ENCODE measurements at regions of chr6 and their contacts with region 1.

Region 1: GRCh38 chr6:146543211-146543939 is at the start of gene RAB32:
- DNase-seq: peak; percentile 95 to 96 (median 96)
- H3K4me3 ChIP-seq: peak within 1 kb of the TSS; percentile 61 to 99 (median 96)
- H3K4me3 Mint-ChIP-seq: peak within 1 kb of the TSS; percentile 100
- H3K27ac ChIP-seq: peak within 1 kb of the TSS; percentile 99
- H3K27ac Mint-ChIP-seq: peak within 1 kb of the TSS; percentile 99 to 100 (median 100)
- H3K4me1 ChIP-seq: peaks cover 38 to 58% of the 10 kb centered on the region in 2 donors
- H3K4me1 Mint-ChIP-seq: peaks cover 53% of the 10 kb centered on the region
- H3K27me3 ChIP-seq: no peaks in the 10 kb centered on the region
- H3K27me3 Mint-ChIP-seq: no peaks in the 10 kb centered on the region
- CTCF ChIP-seq: peak; percentile 94
- polyA plus RNA-seq, gene RAB32: 82.6 to 588 (median 429) TPM

Region 2: GRCh38 chr6:145963216-145964068 is 579.9 kb before region 1 on chr6:
- intact Hi-C with region 1: loop called in 1 of 2 experiments (anchors 10 kb)
- DNase-seq: peak; percentile 12 to 21 (median 18)
- H3K4me3 ChIP-seq: peak overlapping the region; percentile 42 to 89 (median 86)
- H3K4me3 Mint-ChIP-seq: peak overlapping the region; percentile 90 to 96
- H3K27ac ChIP-seq: peak overlapping the region; percentile 67 to 85
- H3K27ac Mint-ChIP-seq: peak overlapping the region; percentile 88 to 96 (median 92)
- H3K4me1 ChIP-seq: peaks cover 15 to 33% of the 10 kb centered on the region in 2 donors
- H3K4me1 Mint-ChIP-seq: peaks cover 37% of the 10 kb centered on the region
- H3K27me3 ChIP-seq: no peaks in the 10 kb centered on the region
- H3K27me3 Mint-ChIP-seq: peaks cover 0 to 3% (median 0%) of the 10 kb centered on the region in 3 donors
- CTCF ChIP-seq: no peak

Region 3: GRCh38 chr6:146498309-146498708 is 45.1 kb before region 1 on chr6:
- intact Hi-C with region 1: no loop called
- DNase-seq: no peak
- H3K4me3 ChIP-seq: no peak overlapping the region
- H3K4me3 Mint-ChIP-seq: no peak overlapping the region
- H3K27ac ChIP-seq: no peak overlapping the region
- H3K27ac Mint-ChIP-seq: no peak overlapping the region
- H3K4me1 ChIP-seq: no peaks in the 10 kb centered on the region
- H3K4me1 Mint-ChIP-seq: no peaks in the 10 kb centered on the region
- H3K27me3 ChIP-seq: no peaks in the 10 kb centered on the region
- H3K27me3 Mint-ChIP-seq: peaks cover 0 to 1% (median 0%) of the 10 kb centered on the region in 3 donors
- CTCF ChIP-seq: no peak

Region 4: DNA sequence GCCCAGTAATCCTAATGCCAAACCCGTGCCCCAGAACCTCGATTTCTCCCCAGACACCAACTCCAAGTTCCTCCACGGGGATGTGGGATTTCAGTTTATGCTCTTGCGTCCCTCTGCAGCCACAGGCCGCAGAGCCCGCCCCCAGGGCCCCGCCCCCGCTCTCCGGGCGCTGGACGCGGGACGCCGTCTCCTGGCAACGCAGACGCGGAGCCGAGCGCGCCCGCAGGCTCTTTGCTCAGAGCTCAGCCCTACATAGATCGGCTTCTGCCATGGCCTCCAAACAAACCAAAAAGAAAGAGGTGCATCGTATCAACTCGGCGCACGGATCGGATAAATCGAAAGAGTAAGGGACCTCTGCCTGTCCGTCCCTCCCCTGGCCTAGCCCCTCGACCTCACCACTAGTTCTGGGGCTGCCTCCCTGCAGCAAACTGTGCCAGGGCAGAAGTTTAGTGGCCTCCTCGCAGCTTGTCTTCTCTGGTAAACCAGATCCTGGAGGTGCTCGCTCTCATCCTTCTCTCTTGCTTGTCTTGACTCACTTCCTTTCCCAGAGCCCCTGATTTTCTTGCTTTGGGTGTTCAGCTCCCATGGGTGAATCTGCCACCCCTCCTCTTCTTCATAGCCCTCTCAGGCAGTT is 55.5 kb after region 1 on chr6 and contains the start of gene ADGB:
- intact Hi-C with region 1: loop called (anchors 5 kb)
- DNase-seq: peak; percentile 40 to 48 (median 47)
- H3K4me3 ChIP-seq: peak within 1 kb of the TSS; percentile 41 to 77 (median 66)
- H3K4me3 Mint-ChIP-seq: peak within 1 kb of the TSS; percentile 88 to 93
- H3K27ac ChIP-seq: no peak within 1 kb of the TSS
- H3K27ac Mint-ChIP-seq: peak within 1 kb of the TSS in 5 of 7 donors; percentile 40 to 86 (median 75)
- H3K4me1 ChIP-seq: peaks cover 53 to 55% of the 10 kb centered on the region in 2 donors
- H3K4me1 Mint-ChIP-seq: peaks cover 53% of the 10 kb centered on the region
- H3K27me3 ChIP-seq: no peaks in the 10 kb centered on the region
- H3K27me3 Mint-ChIP-seq: no peaks in the 10 kb centered on the region
- CTCF ChIP-seq: no peak
- polyA plus RNA-seq, gene ADGB: 0.01 TPM in 1 of 3 donors, not detected in the others

Region 5: GRCh38 chr6:146682919-146683318 is 139.5 kb after region 1 on chr6:
- intact Hi-C with region 1: no loop called
- DNase-seq: no peak
- H3K4me3 ChIP-seq: no peak overlapping the region
- H3K4me3 Mint-ChIP-seq: no peak overlapping the region
- H3K27ac ChIP-seq: no peak overlapping the region
- H3K27ac Mint-ChIP-seq: no peak overlapping the region
- H3K4me1 ChIP-seq: no peaks in the 10 kb centered on the region
- H3K4me1 Mint-ChIP-seq: peaks cover 10% of the 10 kb centered on the region
- H3K27me3 ChIP-seq: no peaks in the 10 kb centered on the region
- H3K27me3 Mint-ChIP-seq: no peaks in the 10 kb centered on the region
- CTCF ChIP-seq: no peak

Region 6: GRCh38 chr6:146700078-146700686 is 156.8 kb after region 1 on chr6:
- intact Hi-C with region 1: loop called (anchors 2 to 5 kb)
- DNase-seq: peak; percentile 71 to 86 (median 76)
- H3K4me3 ChIP-seq: no peak overlapping the region
- H3K4me3 Mint-ChIP-seq: no peak overlapping the region
- H3K27ac ChIP-seq: no peak overlapping the region
- H3K27ac Mint-ChIP-seq: peak overlapping the region in 1 of 7 donors; percentile 6
- H3K4me1 ChIP-seq: peaks cover 0 to 3% of the 10 kb centered on the region in 2 donors
- H3K4me1 Mint-ChIP-seq: peaks cover 5% of the 10 kb centered on the region
- H3K27me3 ChIP-seq: no peaks in the 10 kb centered on the region
- H3K27me3 Mint-ChIP-seq: no peaks in the 10 kb centered on the region
- CTCF ChIP-seq: peak; percentile 78